H1 (cell line): ENCODE measurements at regions of chr7 and their contacts with region 1.

Region 1: GRCh38 chr7:130887182-130888016 is 153.4 kb upstream of the KLF14 start:
- DNase-seq: peak in 1 of 2 experiments; percentile 14
- H3K4me3 ChIP-seq: no peak overlapping the region
- H3K27ac ChIP-seq: no peak overlapping the region
- H3K4me1 ChIP-seq: peaks cover 0 to 3% (median 1%) of the 10 kb centered on the region in 4 experiments; a peak in 4 of 7 replicates
- H3K27me3 ChIP-seq: no peaks in the 10 kb centered on the region
- CTCF ChIP-seq: no peak
- EP300 ChIP-seq: no peak
- POLR2A ChIP-seq: no peak
- RAD21 ChIP-seq: no peak

Region 2: GRCh38 chr7:130875265-130875741 is 12.1 kb before region 1 on chr7:
- CTCF ChIA-PET with region 1: interaction called, 64 read pairs
- POLR2A ChIA-PET with region 1: interaction called, 4 read pairs
- DNase-seq: peak; percentile 54 to 86
- H3K4me3 ChIP-seq: no peak overlapping the region
- H3K27ac ChIP-seq: no peak overlapping the region
- H3K4me1 ChIP-seq: peaks cover 0 to 10% (median 2%) of the 10 kb centered on the region in 4 experiments; a peak in 2 of 7 replicates
- H3K27me3 ChIP-seq: no peaks in the 10 kb centered on the region
- CTCF ChIP-seq: peak; percentile 88 to 97 (median 96)
- EP300 ChIP-seq: no peak
- POLR2A ChIP-seq: no peak
- RAD21 ChIP-seq: peak; percentile 91 to 95